PC-9 (cell line): ENCODE measurements at regions of chr2 and their contacts with region 1.

Region 1: DNA sequence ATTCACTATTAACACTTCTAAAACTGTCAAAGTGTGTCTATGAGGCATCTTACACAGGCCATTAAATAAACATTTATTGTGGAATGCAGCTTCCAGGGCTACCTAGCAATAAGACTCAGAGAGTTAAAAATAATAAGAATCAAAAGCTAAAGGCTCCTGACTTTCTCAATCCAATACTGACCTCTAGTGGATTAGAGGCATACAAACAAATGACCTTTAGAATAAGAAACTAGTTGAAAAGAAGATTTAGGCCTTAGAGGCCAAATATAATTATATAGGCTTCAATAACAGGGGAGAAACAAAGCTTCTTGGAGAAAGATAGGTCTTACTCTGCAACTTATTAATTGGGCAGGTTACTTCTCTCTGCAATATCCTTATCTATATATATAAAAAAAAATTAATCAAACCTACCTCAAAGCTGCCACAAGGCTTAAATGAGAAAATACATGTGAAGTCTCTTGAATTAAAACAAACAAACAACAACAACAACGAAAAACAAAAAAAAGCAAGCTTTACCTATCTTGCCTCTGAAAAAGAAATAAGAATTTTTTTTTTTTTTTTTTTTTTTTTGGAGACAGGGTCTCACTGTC is 246.1 kb downstream of the EXOC6B start:
- DNase-seq: peak in 1 of 2 experiments; percentile 58
- H3K4me3 ChIP-seq: no peak overlapping the region
- H3K27ac ChIP-seq: no peak overlapping the region
- H3K4me1 ChIP-seq: peaks cover 9% of the 10 kb centered on the region
- H3K27me3 ChIP-seq: no peaks in the 10 kb centered on the region
- CTCF ChIP-seq: peak; percentile 90

Region 2: GRCh38 chr2:71923887-71924533 is 655.7 kb before region 1 on chr2:
- CTCF ChIA-PET with region 1: no interaction called
- POLR2A ChIA-PET with region 1: no interaction called
- intact Hi-C with region 1: loop called (anchors 10 kb)
- DNase-seq: peak; percentile 42 to 48
- H3K4me3 ChIP-seq: no peak overlapping the region
- H3K27ac ChIP-seq: no peak overlapping the region
- H3K4me1 ChIP-seq: peaks cover 10% of the 10 kb centered on the region
- H3K27me3 ChIP-seq: no peaks in the 10 kb centered on the region
- CTCF ChIP-seq: peak; percentile 94

Region 3: DNA sequence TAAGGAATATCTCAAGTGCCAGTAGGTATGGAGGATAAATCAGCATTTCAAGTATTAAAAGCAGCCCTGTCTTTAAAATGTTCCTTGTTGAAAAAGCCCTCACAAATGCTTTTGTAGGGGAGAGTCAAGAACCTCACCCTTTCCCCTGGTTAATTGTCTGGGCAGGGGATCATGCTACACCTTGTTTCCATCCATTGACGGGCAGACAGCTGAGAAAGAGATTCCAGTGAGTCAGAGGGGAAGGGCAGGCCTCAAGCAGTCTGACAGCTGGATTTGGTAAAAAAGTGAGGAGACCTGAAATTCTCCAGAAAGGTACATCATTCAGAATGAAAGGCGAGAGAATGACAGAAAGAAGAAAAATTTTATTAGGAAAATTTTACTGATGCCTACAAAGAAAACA is 228.8 kb before region 1 on chr2:
- CTCF ChIA-PET with region 1: no interaction called
- POLR2A ChIA-PET with region 1: interaction called, 12 read pairs
- intact Hi-C with region 1: no loop called
- DNase-seq: no peak
- H3K4me3 ChIP-seq: no peak overlapping the region
- H3K27ac ChIP-seq: no peak overlapping the region
- H3K4me1 ChIP-seq: peaks cover 4% of the 10 kb centered on the region
- H3K27me3 ChIP-seq: no peaks in the 10 kb centered on the region
- CTCF ChIP-seq: no peak

Region 4: GRCh38 chr2:72539071-72539552 is 40.6 kb before region 1 on chr2:
- CTCF ChIA-PET with region 1: no interaction called
- POLR2A ChIA-PET with region 1: no interaction called
- intact Hi-C with region 1: no loop called
- DNase-seq: no peak
- H3K4me3 ChIP-seq: no peak overlapping the region
- H3K27ac ChIP-seq: no peak overlapping the region
- H3K4me1 ChIP-seq: 0 out of 2 replicates have a peak, but pooled peaks cover 3% of the 10 kb centered on the region
- H3K27me3 ChIP-seq: no peaks in the 10 kb centered on the region
- CTCF ChIP-seq: no peak

Region 5: GRCh38 chr2:72605836-72606442 is 26.3 kb after region 1 on chr2:
- CTCF ChIA-PET with region 1: interaction called, 10 read pairs
- POLR2A ChIA-PET with region 1: no interaction called
- intact Hi-C with region 1: no loop called
- DNase-seq: no peak
- H3K4me3 ChIP-seq: no peak overlapping the region
- H3K27ac ChIP-seq: no peak overlapping the region
- H3K4me1 ChIP-seq: no peaks in the 10 kb centered on the region
- H3K27me3 ChIP-seq: no peaks in the 10 kb centered on the region
- CTCF ChIP-seq: peak; percentile 87

Region 6: GRCh38 chr2:72862239-72862988 is 282.7 kb after region 1 on chr2:
- CTCF ChIA-PET with region 1: no interaction called
- POLR2A ChIA-PET with region 1: no interaction called
- intact Hi-C with region 1: loop called (anchors 10 kb)
- DNase-seq: peak; percentile 78 to 90
- H3K4me3 ChIP-seq: peak overlapping the region; percentile 46; the same call in 1 of the 2 replicates
- H3K27ac ChIP-seq: no peak overlapping the region
- H3K4me1 ChIP-seq: no peaks in the 10 kb centered on the region; the same call in 1 of the 2 replicates
- H3K27me3 ChIP-seq: no peaks in the 10 kb centered on the region
- CTCF ChIP-seq: peak; percentile 97